Activated CD4-positive, alpha-beta T cell treated with anti-CD3 and anti-CD28 coated beads for 36 hours (primary cell): ENCODE measurements at regions of chr19 and their contacts with region 1.

Region 1: GRCh38 chr19:19643158-19644053 is at the start of gene GMIP:
- DNase-seq: peak; percentile 92
- ATAC-seq: peak; percentile 82
- H3K4me3 Mint-ChIP-seq: peak within 1 kb of the TSS; percentile 100
- H3K27ac Mint-ChIP-seq: peak within 1 kb of the TSS; percentile 96
- H3K4me1 Mint-ChIP-seq: peaks cover 10% of the 10 kb centered on the region
- H3K27me3 Mint-ChIP-seq: no peaks in the 10 kb centered on the region
- total RNA-seq, gene GMIP: 54.9 to 56.6 TPM

Region 2: DNA sequence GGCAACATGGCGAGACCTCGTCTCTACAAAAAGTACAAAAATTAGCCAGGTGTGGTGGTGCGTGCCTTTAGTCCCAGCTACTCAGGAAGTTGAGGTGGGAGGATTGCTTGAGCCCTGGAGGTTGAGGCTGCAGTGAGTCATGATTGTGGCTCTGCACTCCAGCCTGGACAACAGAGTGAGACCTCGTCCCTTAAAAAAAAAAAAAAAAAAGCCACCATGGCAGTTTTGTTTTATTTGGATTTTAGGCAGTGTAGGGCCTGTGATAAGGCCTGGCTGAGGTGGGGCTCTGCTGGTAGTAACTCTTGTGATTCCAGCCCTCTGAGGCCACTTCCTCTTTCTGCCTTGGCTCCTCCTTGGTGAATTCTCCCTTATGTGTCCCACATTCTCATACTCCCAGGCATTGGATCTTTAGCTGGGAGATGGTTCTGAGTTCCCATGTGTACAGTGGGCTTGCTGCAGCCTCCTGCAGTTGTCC is 198.7 kb before region 1 on chr19:
- CTCF ChIA-PET with region 1: no interaction called
- POLR2A ChIA-PET with region 1: no interaction called
- intact Hi-C with region 1: no loop called
- DNase-seq: peak; percentile 29
- ATAC-seq: peak; percentile 10
- H3K4me3 Mint-ChIP-seq: peak overlapping the region; percentile 7
- H3K27ac Mint-ChIP-seq: peak overlapping the region; percentile 85
- H3K4me1 Mint-ChIP-seq: peaks cover 73% of the 10 kb centered on the region
- H3K27me3 Mint-ChIP-seq: no peaks in the 10 kb centered on the region

Region 3: GRCh38 chr19:19531951-19532805 is 111.2 kb before region 1 on chr19:
- CTCF ChIA-PET with region 1: interaction called, 30 read pairs
- POLR2A ChIA-PET with region 1: interaction called, 3 read pairs
- intact Hi-C with region 1: loop called (anchors 1 kb)
- DNase-seq: peak; percentile 92
- ATAC-seq: peak; percentile 87
- H3K4me3 Mint-ChIP-seq: no peak overlapping the region
- H3K27ac Mint-ChIP-seq: no peak overlapping the region
- H3K4me1 Mint-ChIP-seq: peaks cover 10% of the 10 kb centered on the region
- H3K27me3 Mint-ChIP-seq: no peaks in the 10 kb centered on the region

Region 4: DNA sequence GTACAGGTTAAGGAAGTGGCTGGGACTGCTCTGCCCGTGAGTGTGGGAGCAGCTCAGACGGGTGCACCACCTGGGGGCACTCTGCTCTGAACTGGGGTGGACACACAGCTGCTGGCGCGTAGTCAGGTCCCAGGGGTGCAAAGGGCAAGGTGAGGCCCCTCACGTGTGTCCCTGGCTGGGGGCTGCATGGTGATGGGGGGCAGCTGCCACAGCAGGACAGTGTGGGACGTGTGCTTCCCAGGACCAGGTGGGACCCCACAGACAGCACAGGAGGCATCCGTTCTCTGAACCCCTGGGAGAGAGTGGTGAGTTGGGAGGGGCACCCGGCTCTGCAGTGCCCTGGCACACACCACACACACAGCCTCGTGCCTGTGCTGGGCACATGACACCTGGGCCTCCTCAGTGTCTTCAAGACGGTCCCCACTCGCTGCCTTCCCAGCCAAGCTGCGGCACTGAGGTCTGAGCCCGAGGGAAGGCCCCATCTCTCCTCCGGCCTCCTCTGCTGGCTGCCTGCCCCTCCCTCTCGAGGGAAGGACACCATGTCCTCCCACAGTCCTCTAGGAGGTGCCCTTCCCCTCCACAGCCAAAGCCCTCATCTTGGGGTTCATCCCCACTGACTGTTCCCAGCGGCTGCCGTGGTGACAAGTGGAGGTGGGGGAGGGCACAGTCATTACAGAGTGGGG is 80.6 kb before region 1 on chr19:
- CTCF ChIA-PET with region 1: interaction called, 4 read pairs
- POLR2A ChIA-PET with region 1: no interaction called
- intact Hi-C with region 1: loop called in 1 of 2 experiments (anchors 1 kb)
- DNase-seq: peak; percentile 63
- ATAC-seq: peak; percentile 82
- H3K4me3 Mint-ChIP-seq: no peak overlapping the region
- H3K27ac Mint-ChIP-seq: no peak overlapping the region
- H3K4me1 Mint-ChIP-seq: peaks cover 15% of the 10 kb centered on the region
- H3K27me3 Mint-ChIP-seq: no peaks in the 10 kb centered on the region

Region 5: DNA sequence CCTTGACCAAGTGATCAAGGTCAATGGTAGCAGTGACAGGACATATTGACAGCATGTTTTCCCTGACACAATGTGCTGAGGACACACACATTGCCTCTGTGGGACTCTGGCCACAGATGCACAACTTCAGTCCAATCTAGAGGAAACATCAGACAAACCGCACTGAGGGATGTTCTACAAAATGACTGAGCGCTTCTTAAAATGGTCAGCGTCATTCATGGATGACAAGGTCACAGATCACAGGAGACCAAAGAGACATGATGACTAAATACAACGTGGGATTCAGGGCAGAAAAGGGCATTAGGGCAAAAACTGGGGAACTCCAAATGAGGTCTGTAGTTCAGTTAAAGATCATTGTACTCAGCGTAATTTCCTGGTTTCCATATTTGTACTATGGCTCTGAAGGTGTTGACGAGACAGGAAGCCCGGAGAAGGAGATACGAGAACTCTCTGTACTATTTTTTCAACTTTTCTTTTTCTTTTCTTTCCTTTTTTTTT is 45.5 kb before region 1 on chr19:
- CTCF ChIA-PET with region 1: interaction called, 3 read pairs
- POLR2A ChIA-PET with region 1: interaction called, 3 read pairs
- intact Hi-C with region 1: loop called in 1 of 2 experiments (anchors 2 kb)
- DNase-seq: peak; percentile 70
- ATAC-seq: peak; percentile 66
- H3K4me3 Mint-ChIP-seq: peak overlapping the region; percentile 67
- H3K27ac Mint-ChIP-seq: peak overlapping the region; percentile 97
- H3K4me1 Mint-ChIP-seq: peaks cover 82% of the 10 kb centered on the region
- H3K27me3 Mint-ChIP-seq: no peaks in the 10 kb centered on the region

Region 6: DNA sequence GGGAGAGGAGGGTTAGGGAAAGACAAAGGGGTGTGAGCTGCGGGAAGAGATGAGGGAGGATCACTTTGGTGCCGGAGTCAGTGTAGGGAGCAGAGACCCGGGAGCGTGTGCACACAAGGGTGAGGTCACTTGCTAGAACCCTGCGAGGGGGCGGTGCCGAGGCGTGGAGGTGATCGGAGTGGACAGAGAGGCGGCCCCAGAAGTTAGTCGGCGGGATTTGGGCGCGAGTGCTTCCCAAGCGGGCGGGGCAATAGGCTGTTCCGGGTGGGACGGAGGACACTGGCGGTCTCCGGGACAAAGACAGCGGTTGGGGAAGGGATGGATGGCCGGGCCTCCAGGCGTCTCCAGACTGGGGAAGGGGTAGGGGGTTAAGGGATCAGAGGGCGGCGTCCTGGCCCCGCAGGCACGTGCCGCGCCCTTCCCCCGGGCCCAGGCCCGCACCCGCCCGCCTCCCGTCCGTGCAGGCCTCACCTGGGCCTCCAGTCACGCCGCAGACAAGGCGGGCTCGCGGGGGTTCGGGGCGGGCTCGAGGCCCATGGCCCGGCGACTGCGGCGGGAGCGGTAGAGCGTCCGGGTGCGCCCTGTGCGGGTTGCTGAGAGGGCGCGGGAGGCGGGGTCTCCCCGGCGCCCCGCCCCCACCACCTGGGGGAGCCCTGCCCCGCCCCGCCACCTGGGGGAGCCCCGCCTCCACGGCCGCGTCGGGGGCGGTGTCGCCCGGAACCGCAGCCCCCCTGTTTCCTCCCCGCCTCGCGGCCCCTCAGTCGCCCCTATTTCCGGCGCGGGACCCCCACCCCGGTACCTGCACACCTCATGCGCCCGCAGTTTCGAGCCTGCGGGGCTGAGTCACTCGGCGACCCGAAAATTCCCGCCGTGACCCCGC is 15.5 kb before region 1 on chr19 and contains the start of gene LPAR2:
- CTCF ChIA-PET with region 1: no interaction called
- POLR2A ChIA-PET with region 1: no interaction called
- intact Hi-C with region 1: loop called in 1 of 2 experiments (anchors 1 kb)
- DNase-seq: peak; percentile 81
- ATAC-seq: peak; percentile 74
- H3K4me3 Mint-ChIP-seq: peak within 1 kb of the TSS; percentile 80
- H3K27ac Mint-ChIP-seq: peak within 1 kb of the TSS; percentile 79
- H3K4me1 Mint-ChIP-seq: peaks cover 23% of the 10 kb centered on the region
- H3K27me3 Mint-ChIP-seq: no peaks in the 10 kb centered on the region
- total RNA-seq, gene LPAR2: 21.6 to 33.2 TPM